H1 (cell line): ENCODE measurements at regions of chr6 and their contacts with region 1.

Region 1: GRCh38 chr6:118080547-118080946 is 173.5 kb downstream of the SLC35F1 start:
- DNase-seq: no peak
- H3K4me3 ChIP-seq: no peak overlapping the region
- H3K27ac ChIP-seq: no peak overlapping the region
- H3K4me1 ChIP-seq: no peaks in the 10 kb centered on the region
- H3K27me3 ChIP-seq: no peaks in the 10 kb centered on the region
- CTCF ChIP-seq: peak in 2 of 3 experiments; percentile 47 to 64; a peak in 3 of 4 replicates
- EP300 ChIP-seq: no peak
- POLR2A ChIP-seq: no peak
- RAD21 ChIP-seq: peak; percentile 22 to 47; a peak in 3 of 4 replicates

Region 2: GRCh38 chr6:117976030-117976651 is 104.4 kb before region 1 on chr6:
- CTCF ChIA-PET with region 1: interaction called, 30 read pairs
- POLR2A ChIA-PET with region 1: no interaction called
- DNase-seq: no peak
- H3K4me3 ChIP-seq: no peak overlapping the region
- H3K27ac ChIP-seq: no peak overlapping the region
- H3K4me1 ChIP-seq: 0 out of 7 replicates have a peak, but pooled peaks cover 0 to 3% (median 0%) of the 10 kb centered on the region in 4 experiments
- H3K27me3 ChIP-seq: no peaks in the 10 kb centered on the region
- CTCF ChIP-seq: peak in 2 of 3 experiments; percentile 62 to 76; a peak in 3 of 4 replicates
- EP300 ChIP-seq: no peak
- POLR2A ChIP-seq: no peak
- RAD21 ChIP-seq: peak; percentile 71 to 78

Region 3: GRCh38 chr6:118061666-118062065 is 18.9 kb before region 1 on chr6:
- CTCF ChIA-PET with region 1: interaction called, 21 read pairs
- POLR2A ChIA-PET with region 1: no interaction called
- DNase-seq: no peak
- H3K4me3 ChIP-seq: no peak overlapping the region
- H3K27ac ChIP-seq: no peak overlapping the region
- H3K4me1 ChIP-seq: no peaks in the 10 kb centered on the region
- H3K27me3 ChIP-seq: no peaks in the 10 kb centered on the region
- CTCF ChIP-seq: no peak
- EP300 ChIP-seq: no peak
- POLR2A ChIP-seq: no peak
- RAD21 ChIP-seq: no peak

Region 4: GRCh38 chr6:118100717-118101116 is 20.2 kb after region 1 on chr6:
- CTCF ChIA-PET with region 1: interaction called, 17 read pairs
- POLR2A ChIA-PET with region 1: no interaction called
- DNase-seq: no peak
- H3K4me3 ChIP-seq: 0 out of 8 replicates have a peak overlapping the region, but pooled peaks of 1 of the 4 experiments have one; percentile 6
- H3K27ac ChIP-seq: no peak overlapping the region
- H3K4me1 ChIP-seq: no peaks in the 10 kb centered on the region
- H3K27me3 ChIP-seq: no peaks in the 10 kb centered on the region
- CTCF ChIP-seq: no peak
- EP300 ChIP-seq: no peak
- POLR2A ChIP-seq: no peak
- RAD21 ChIP-seq: no peak